ENCODE measurements at regions of chr2 and their contacts with region 1.

Region 1: GRCh38 chr2:85561317-85561979 is at the start of gene GGCX:
- DNase-seq: peak; percentile 95
- ATAC-seq: peak; percentile 89
- H3K4me3 ChIP-seq: peak within 1 kb of the TSS; percentile 84 to 98 (median 91)
- H3K27ac ChIP-seq: peak within 1 kb of the TSS; percentile 91
- H3K4me1 ChIP-seq: peaks cover 59% of the 10 kb centered on the region
- H3K27me3 ChIP-seq: peaks cover 0 to 4% of the 10 kb centered on the region in 2 experiments; a peak in 1 of 5 replicates
- CTCF ChIP-seq: peak; percentile 48
- EP300 ChIP-seq: peak; percentile 35 to 56; a peak in 3 of 4 replicates
- POLR2A ChIP-seq: peak; percentile 98
- RAD21 ChIP-seq: peak; percentile 70
- total RNA-seq, gene GGCX: 51.3 and 103 TPM in 2 replicates

Region 2: DNA sequence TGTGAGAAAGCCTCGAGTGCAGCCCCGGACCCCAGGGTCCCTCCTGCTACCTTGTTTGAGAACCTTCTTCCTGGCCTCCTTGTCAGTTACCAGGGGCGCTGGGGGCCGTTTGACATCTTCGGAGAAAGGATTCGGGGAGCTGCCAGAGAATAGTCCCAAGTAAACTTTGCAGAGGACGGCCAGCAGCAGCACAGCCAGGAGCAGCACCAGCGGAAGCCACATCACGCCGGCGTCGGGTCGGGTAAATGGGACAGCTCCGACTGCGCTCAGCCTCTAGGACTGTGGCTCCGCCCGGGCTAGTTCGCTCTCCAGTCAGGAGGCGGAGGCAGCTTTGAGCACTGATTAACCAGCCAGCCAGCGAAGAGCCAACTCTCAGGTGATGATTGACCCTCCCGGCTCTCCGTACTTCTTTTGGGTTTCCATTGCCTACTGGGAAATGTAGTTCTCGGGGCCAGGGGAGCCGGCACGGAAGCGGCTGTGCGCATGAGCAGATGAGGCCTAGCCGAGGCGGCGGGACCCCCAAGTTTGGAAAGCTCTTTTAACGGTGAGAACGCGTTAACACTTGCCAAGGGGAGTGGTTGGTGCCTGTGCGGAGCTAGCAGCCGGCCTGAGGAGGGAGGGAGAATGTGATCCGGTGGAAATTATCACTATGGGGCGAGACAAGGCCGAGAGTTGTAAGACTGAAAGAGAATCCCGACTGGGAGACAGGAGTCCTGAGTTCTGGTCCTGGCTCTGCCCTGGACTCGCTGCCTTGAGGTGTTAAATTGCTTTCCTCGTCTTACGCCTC is 207.0 kb before region 1 on chr2 and contains the starts of genes ELMOD3 and RETSAT:
- CTCF ChIA-PET with region 1: no interaction called
- POLR2A ChIA-PET with region 1: interaction called, 18 read pairs
- in situ Hi-C with region 1: no loop called
- intact Hi-C with region 1: no loop called
- DNase-seq: peak; percentile 100
- ATAC-seq: peak; percentile 98
- H3K4me3 ChIP-seq: peak within 1 kb of the TSS; percentile 89 to 93 (median 91)
- H3K27ac ChIP-seq: peak within 1 kb of the TSS; percentile 72
- H3K4me1 ChIP-seq: peaks cover 33% of the 10 kb centered on the region
- H3K27me3 ChIP-seq: no peaks in the 10 kb centered on the region; a peak in 1 of 5 replicates
- CTCF ChIP-seq: peak; percentile 13; the same call in 1 of the 2 replicates
- EP300 ChIP-seq: peak in 1 of 2 experiments; percentile 61; a peak in 1 of 4 replicates
- POLR2A ChIP-seq: peak; percentile 100
- RAD21 ChIP-seq: peak; percentile 67
- total RNA-seq, gene ELMOD3: 10.3 and 13.3 TPM in 2 replicates
- total RNA-seq, gene RETSAT: 17.2 and 46.7 TPM in 2 replicates

Region 3: DNA sequence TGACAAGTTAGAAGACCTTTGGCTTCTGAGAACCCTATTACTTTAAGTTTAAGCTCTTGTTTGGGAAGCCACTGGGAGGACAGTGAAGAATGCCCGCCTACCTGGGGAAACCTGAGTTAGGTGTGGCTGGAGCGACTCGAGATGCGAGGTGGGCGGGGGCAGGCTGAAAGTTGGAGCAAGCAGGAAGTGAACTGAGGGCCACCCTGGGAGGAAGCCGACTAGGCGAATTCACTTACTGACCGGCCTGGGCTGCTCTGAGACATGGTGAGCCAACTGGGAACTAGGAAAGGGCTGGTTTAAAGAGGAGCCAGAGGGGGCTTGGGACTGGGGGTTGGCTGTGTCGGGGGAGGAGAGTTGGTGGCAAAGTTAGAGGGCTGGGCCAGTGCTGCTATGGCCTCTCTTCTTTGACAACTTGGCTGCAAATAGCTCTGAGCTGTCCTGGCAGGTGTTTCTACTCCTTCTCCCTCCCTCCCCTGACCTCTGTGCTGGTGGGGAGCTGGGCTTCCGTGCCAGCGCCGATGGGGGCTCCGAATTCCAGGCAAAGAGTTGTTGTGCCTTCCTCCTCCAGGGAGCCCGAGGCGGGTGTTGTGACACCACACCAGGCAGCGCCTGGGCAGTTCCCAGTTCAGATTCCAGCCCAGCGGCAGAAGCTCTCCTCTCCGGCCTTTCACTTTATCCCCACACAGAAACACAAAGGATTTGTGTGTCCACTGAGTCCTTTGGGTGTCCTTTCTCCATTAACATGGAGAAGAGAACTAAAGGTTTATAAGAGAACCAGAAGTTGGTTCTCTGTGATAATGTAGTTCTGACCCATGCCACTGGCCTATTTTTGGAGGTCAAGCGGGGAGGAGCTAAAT is 16.2 kb after region 1 on chr2 and contains the start of gene VAMP8:
- CTCF ChIA-PET with region 1: no interaction called
- POLR2A ChIA-PET with region 1: interaction called, 201 read pairs
- in situ Hi-C with region 1: no loop called
- intact Hi-C with region 1: loop called (anchors 2 kb)
- DNase-seq: peak; percentile 44
- ATAC-seq: peak; percentile 86
- H3K4me3 ChIP-seq: peak within 1 kb of the TSS; percentile 79 to 90 (median 87)
- H3K27ac ChIP-seq: peak within 1 kb of the TSS; percentile 64
- H3K4me1 ChIP-seq: peaks cover 58% of the 10 kb centered on the region
- H3K27me3 ChIP-seq: peaks cover 0 to 3% of the 10 kb centered on the region in 2 experiments; a peak in 2 of 5 replicates
- CTCF ChIP-seq: no peak
- EP300 ChIP-seq: no peak
- POLR2A ChIP-seq: peak; percentile 41 to 69; a peak in 3 of 4 replicates
- RAD21 ChIP-seq: no peak; the same call in 1 of the 2 replicates
- total RNA-seq, gene VAMP8: 83.3 and 97.0 TPM in 2 replicates

Region 4: DNA sequence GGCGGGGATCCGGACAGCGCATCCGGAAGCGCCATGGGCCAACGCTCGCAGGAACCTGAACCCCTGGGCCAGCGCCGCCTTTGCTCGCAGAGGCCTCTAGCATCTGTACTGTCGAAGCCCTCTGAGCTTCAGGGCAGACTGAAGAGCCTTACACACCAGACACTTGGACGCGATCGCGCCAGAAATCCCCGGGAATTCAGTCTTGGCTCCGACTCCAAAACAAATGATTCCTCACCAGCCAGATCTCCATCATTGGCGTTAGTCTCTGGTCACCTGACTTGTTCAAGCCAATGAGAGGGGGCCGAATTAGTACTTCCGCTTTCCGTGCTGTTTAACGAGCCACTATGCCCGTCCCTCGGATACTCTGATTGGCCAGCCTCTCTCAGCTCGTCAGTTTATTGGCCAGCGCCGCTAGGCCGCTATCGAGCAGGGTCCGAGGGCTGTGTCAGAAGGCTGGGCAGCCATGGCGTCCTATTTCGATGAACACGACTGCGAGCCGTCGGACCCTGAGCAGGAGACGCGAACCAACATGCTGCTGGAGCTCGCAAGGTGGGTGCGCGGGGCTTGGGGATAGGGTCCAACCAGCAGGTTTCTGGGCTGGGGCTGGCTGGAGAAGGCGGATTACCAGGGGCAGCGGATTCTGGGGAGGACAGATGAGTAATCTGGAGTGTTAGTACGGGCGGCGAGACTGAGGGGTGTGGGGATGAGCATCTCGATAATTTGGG is 34.0 kb after region 1 on chr2 and contains the start of gene RNF181:
- CTCF ChIA-PET with region 1: no interaction called
- POLR2A ChIA-PET with region 1: interaction called, 645 read pairs
- in situ Hi-C with region 1: no loop called
- intact Hi-C with region 1: no loop called
- DNase-seq: peak; percentile 99
- ATAC-seq: peak; percentile 92
- H3K4me3 ChIP-seq: peak within 1 kb of the TSS; percentile 88 to 97 (median 90)
- H3K27ac ChIP-seq: peak within 1 kb of the TSS; percentile 80
- H3K4me1 ChIP-seq: peaks cover 86% of the 10 kb centered on the region
- H3K27me3 ChIP-seq: no peaks in the 10 kb centered on the region; a peak in 1 of 5 replicates
- CTCF ChIP-seq: no peak
- EP300 ChIP-seq: no peak
- POLR2A ChIP-seq: peak in 1 of 2 experiments; percentile 77; a peak in 1 of 4 replicates
- RAD21 ChIP-seq: no peak; the same call in 1 of the 2 replicates
- total RNA-seq, gene RNF181: 224 and 234 TPM in 2 replicates

Region 5: DNA sequence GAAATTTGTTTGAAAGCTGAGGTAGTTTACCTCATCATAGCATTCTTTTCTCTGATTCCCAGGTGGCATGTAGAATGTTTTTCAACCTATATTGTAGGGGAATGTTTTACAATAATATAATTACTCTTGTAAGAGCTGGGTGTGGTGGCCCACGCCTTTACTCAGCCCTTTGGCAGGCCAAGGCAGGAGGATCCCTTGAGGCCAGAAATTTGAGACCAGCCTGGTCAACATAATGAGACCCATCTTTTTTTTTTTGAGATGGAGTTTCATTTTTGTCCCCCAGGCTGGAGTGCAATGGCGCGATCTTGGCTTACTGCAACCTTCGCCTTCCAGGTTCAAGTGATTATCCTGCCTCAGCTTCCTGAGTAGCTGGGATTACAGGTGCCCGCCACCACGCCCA is 58.2 kb after region 1 on chr2:
- CTCF ChIA-PET with region 1: no interaction called
- POLR2A ChIA-PET with region 1: interaction called, 36 read pairs
- in situ Hi-C with region 1: no loop called
- intact Hi-C with region 1: no loop called
- DNase-seq: no peak
- ATAC-seq: no peak
- H3K4me3 ChIP-seq: no peak overlapping the region
- H3K27ac ChIP-seq: no peak overlapping the region
- H3K4me1 ChIP-seq: peaks cover 60% of the 10 kb centered on the region
- H3K27me3 ChIP-seq: no peaks in the 10 kb centered on the region
- CTCF ChIP-seq: no peak
- EP300 ChIP-seq: no peak
- POLR2A ChIP-seq: no peak
- RAD21 ChIP-seq: no peak